ENCODE measurements at regions of chr2 and their contacts with region 1.

Region 1: GRCh38 chr2:169462896-169463695 is 16.2 kb upstream of the BBS5 start:
- DNase-seq: no peak
- H3K4me3 Mint-ChIP-seq: no peak overlapping the region
- H3K27ac Mint-ChIP-seq: no peak overlapping the region
- H3K4me1 Mint-ChIP-seq: no peaks in the 10 kb centered on the region
- H3K27me3 Mint-ChIP-seq: peaks cover 2% of the 10 kb centered on the region

Region 2: DNA sequence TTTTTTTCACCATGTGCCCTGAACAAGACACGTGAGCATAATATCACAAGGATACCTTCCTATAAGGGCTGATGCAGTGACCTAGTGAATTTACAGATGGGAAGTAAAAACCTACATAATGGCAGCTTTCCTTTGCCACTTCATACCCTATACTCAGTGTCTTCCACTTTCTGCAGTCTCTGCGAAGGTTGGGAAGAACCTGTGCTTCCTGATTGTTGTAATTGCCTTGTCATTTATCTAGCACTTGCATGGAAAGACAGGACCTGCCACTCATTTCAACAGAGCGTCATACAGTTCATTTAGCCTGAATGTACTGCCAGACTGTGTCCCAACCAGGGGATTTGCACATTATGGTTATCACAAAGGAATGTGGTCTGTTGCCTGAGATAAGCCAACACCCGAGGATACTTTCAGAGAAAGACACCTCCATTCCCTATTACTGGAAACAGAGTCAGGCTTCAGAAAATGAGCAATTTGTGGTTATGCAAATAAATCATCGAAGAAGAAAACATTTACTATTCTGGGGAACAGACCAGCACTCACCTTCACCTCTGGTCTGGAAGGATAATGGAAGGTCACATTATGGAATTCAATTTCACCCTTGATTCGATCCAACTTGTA is 487.0 kb before region 1 on chr2:
- intact Hi-C with region 1: loop called (anchors 5 kb)
- DNase-seq: no peak
- H3K4me3 Mint-ChIP-seq: no peak overlapping the region
- H3K27ac Mint-ChIP-seq: no peak overlapping the region
- H3K4me1 Mint-ChIP-seq: no peaks in the 10 kb centered on the region
- H3K27me3 Mint-ChIP-seq: no peaks in the 10 kb centered on the region

Region 3: DNA sequence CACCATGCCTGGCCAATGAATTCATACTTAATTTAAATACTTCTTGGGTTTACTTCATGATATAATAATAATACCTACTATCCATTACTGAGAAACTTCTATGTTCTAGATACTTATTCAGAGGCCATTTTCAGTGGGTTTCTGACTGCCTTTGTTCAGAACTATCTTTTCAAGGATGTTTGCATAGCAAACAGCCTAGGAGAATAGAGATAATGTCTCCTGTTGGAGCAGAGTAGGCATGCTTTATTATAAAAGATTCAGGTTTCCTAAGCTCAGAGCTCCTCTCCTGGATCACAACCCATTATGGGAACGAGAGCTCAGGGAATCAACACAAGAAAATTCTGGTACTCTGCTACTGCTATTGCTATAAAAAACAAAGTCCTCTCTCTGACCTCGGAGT is 99.4 kb after region 1 on chr2:
- intact Hi-C with region 1: loop called (anchors 5 kb)
- DNase-seq: no peak
- H3K4me3 Mint-ChIP-seq: no peak overlapping the region
- H3K27ac Mint-ChIP-seq: no peak overlapping the region
- H3K4me1 Mint-ChIP-seq: no peaks in the 10 kb centered on the region
- H3K27me3 Mint-ChIP-seq: no peaks in the 10 kb centered on the region